Naive thymus-derived CD8-positive, alpha-beta T cell (primary cell): ENCODE measurements at regions of chr19 and their contacts with region 1.

Region 1: DNA sequence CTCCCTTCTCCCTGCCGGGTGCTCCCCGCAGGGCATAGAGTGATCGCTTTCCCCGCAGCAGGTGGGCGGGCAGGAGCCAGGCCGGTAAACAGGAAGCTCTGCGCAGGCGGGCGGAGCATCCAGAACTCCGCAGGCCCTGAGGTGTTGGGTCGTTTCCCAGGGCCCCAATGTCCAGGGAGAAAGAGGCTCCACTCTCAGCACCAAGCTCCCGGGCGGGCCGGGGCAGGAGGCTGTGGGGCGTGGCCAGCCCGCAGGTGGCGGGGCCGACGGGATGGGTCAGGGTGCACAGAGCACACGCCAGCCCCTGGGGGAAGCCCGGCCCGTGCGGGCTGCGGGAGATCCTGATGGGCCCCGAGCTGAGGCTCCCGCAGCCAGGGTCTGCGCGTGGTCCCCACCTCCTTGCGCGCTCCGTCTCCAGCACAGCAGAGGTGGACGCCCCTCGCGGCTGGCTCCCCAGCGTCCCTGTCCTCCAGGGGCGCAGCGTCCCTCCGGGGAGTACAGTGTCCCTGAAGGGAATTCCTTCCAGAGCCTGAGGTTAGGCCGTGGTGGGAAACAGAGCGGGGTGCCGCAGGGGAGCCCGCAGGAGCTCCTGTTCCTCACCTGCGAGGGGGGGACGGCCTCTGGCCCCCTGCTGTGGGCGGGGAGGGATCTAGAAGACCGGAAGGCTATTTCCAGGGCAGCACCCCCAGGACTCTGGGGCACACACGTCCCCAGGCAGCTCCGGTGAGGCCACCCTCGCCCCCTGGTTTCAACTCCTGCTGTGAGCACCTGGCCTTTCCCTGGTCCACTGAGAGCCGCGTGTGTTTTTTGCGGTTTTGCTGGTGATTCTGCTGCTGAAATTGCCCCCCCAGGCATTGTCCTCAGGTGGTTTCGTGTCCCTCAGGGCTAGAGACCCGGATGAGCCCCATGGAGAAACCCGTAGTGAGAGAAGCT is 12.2 kb downstream of the PIP5K1C start:
- DNase-seq: peak in 6 of 10 donors; percentile 36 to 70 (median 50)
- ATAC-seq: peak; percentile 78 to 80
- H3K4me3 Mint-ChIP-seq: peak overlapping the region; percentile 78 to 98 (median 88)
- H3K27ac Mint-ChIP-seq: peak overlapping the region; percentile 85 to 98 (median 94)
- H3K4me1 Mint-ChIP-seq: peaks cover 27 to 56% (median 50%) of the 10 kb centered on the region in 4 donors
- H3K27me3 Mint-ChIP-seq: no peaks in the 10 kb centered on the region

Region 2: GRCh38 chr19:3672993-3673392 is 15.0 kb before region 1 on chr19:
- POLR2A ChIA-PET with region 1: interaction called, 11 read pairs
- DNase-seq: no peak
- ATAC-seq: no peak
- H3K4me3 Mint-ChIP-seq: peak overlapping the region in 3 of 10 donors; percentile 24 to 55 (median 30)
- H3K27ac Mint-ChIP-seq: peak overlapping the region in 3 of 10 donors; percentile 18 to 66 (median 31)
- H3K4me1 Mint-ChIP-seq: peaks cover 12 to 41% (median 38%) of the 10 kb centered on the region in 4 donors
- H3K27me3 Mint-ChIP-seq: no peaks in the 10 kb centered on the region

Region 3: GRCh38 chr19:3700221-3701032 is 12.4 kb after region 1 on chr19 and contains the start of gene PIP5K1C:
- POLR2A ChIA-PET with region 1: interaction called, 98 read pairs
- DNase-seq: peak; percentile 82 to 98 (median 92)
- ATAC-seq: peak; percentile 93
- H3K4me3 Mint-ChIP-seq: peak within 1 kb of the TSS; percentile 86 to 95 (median 90)
- H3K27ac Mint-ChIP-seq: peak within 1 kb of the TSS; percentile 64 to 94 (median 84)
- H3K4me1 Mint-ChIP-seq: peaks cover 15 to 33% (median 29%) of the 10 kb centered on the region in 4 donors
- H3K27me3 Mint-ChIP-seq: peaks cover 0 to 7% (median 0%) of the 10 kb centered on the region in 5 donors
- polyA plus RNA-seq, gene PIP5K1C: 3.9 to 10.1 (median 7.4) TPM